ENCODE measurements at regions of chr15 and their contacts with region 1.

Region 1: DNA sequence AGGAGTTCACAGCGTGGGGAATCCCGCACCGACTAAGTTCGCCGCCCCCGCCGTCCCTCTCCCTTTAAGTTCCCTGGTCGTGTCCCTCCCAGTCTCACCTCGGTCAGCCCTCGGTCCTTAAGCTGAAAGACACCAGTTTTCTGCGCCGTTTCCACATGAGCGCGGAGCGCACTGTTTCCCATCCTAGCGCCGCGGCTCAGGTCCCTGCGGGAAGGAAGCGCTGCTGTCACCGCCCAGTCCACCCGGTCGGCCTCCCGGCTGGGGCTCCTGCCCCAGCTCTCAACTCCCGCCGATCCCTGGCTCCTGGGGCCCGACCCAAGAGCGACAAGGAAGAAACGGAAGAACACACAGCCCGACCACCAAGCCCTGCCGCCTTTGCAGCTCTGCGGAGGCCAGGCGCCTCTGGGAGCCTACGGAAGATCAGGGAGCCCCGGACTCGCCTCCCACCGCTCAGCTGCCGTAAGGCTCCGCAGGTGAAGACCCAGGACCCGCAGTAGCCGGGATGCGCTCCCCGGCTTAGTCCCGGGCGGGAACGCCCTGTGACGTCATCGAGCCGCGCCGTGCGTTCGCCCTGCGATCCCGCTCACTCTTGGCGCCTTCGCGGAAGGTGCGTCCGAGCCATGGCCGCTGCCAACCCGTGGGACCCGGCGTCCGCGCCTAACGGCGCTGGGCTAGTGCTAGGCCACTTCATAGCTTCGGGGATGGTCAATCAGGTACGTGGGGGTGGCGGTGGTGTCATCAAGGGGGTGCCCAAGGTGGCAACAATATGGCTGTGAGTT is at the starts of genes HAUS2 and LRRC57:
- DNase-seq: peak; percentile 88 to 93
- H3K4me3 ChIP-seq: peak within 1 kb of the TSS; percentile 97
- H3K4me3 Mint-ChIP-seq: peak within 1 kb of the TSS; percentile 96
- H3K27ac Mint-ChIP-seq: peak within 1 kb of the TSS; percentile 99
- H3K4me1 ChIP-seq: no peaks in the 10 kb centered on the region
- H3K4me1 Mint-ChIP-seq: peaks cover 28% of the 10 kb centered on the region
- H3K27me3 ChIP-seq: no peaks in the 10 kb centered on the region
- H3K27me3 Mint-ChIP-seq: no peaks in the 10 kb centered on the region
- CTCF ChIP-seq: no peak
- total RNA-seq, gene HAUS2: 35.7 and 36.9 TPM in 2 replicates
- total RNA-seq, gene LRRC57: 19.3 and 28.8 TPM in 2 replicates

Region 2: GRCh38 chr15:42444415-42445063 is 103.9 kb before region 1 on chr15:
- CTCF ChIA-PET with region 1: no interaction called
- POLR2A ChIA-PET with region 1: no interaction called
- intact Hi-C with region 1: no loop called
- DNase-seq: no peak
- H3K4me3 ChIP-seq: no peak overlapping the region
- H3K4me3 Mint-ChIP-seq: no peak overlapping the region
- H3K27ac Mint-ChIP-seq: no peak overlapping the region
- H3K4me1 ChIP-seq: no peaks in the 10 kb centered on the region
- H3K4me1 Mint-ChIP-seq: no peaks in the 10 kb centered on the region
- H3K27me3 ChIP-seq: no peaks in the 10 kb centered on the region
- H3K27me3 Mint-ChIP-seq: no peaks in the 10 kb centered on the region
- CTCF ChIP-seq: no peak

Region 3: DNA sequence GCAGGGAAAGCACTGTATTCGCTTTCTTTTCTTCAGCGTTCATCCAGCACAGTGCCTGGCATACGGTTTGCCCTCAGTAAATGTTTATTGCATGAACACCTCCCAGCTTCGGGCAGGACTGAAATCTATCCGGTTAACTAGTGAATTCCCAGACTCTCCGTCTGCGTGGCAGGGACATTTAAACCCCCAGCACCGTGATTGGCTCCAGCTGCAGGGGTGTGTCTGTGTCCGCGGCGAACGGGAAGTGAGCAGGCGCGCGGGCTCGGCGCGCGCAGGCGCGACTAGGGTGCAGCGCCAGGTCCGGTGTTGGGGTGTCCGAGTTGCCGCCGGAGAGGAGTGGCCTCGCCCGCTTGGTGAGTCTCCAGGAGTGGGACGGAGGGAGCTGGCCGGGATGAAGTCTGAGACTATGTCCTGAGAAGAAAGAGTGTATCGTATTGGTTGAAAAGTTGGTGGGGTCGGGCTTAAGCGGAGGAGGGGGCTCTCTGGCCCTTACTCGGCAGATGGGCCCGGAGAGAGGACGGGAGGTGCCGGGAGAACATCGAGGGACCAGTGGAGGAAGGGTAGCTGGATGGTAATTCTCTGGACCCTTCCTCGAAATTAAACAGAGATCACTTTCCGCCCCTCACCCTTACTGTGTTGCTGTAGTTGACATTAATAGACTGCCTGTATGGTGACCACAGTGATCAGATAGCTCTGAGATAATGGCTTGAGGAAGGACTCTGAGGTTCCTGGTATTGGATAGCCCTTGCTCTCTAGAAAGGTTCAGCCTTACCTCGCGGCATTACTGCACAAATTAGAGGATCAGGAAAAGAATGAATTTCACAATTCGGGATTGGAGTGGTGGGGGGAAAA is 52.9 kb before region 1 on chr15 and contains the start of gene SNAP23:
- CTCF ChIA-PET with region 1: no interaction called
- POLR2A ChIA-PET with region 1: interaction called, 4 read pairs
- intact Hi-C with region 1: loop called (anchors 2 kb)
- DNase-seq: peak; percentile 92 to 93
- H3K4me3 ChIP-seq: peak within 1 kb of the TSS; percentile 56
- H3K4me3 Mint-ChIP-seq: peak within 1 kb of the TSS; percentile 84
- H3K27ac Mint-ChIP-seq: peak within 1 kb of the TSS; percentile 72
- H3K4me1 ChIP-seq: peaks cover 42% of the 10 kb centered on the region
- H3K4me1 Mint-ChIP-seq: peaks cover 42% of the 10 kb centered on the region
- H3K27me3 ChIP-seq: no peaks in the 10 kb centered on the region
- H3K27me3 Mint-ChIP-seq: no peaks in the 10 kb centered on the region
- CTCF ChIP-seq: no peak
- total RNA-seq, gene SNAP23: 92.2 and 97.5 TPM in 2 replicates

Region 4: GRCh38 chr15:42575188-42576039 is 27.0 kb after region 1 on chr15 and contains the start of gene STARD9:
- CTCF ChIA-PET with region 1: no interaction called
- POLR2A ChIA-PET with region 1: interaction called, 8 read pairs
- intact Hi-C with region 1: loop called (anchors 1 kb)
- DNase-seq: peak; percentile 98
- H3K4me3 ChIP-seq: peak within 1 kb of the TSS; percentile 58
- H3K4me3 Mint-ChIP-seq: peak within 1 kb of the TSS; percentile 86
- H3K27ac Mint-ChIP-seq: peak within 1 kb of the TSS; percentile 37
- H3K4me1 ChIP-seq: 0 out of 2 replicates have a peak, but pooled peaks cover 10% of the 10 kb centered on the region
- H3K4me1 Mint-ChIP-seq: no peaks in the 10 kb centered on the region
- H3K27me3 ChIP-seq: peaks cover 1% of the 10 kb centered on the region; the same call in 1 of the 2 replicates
- H3K27me3 Mint-ChIP-seq: peaks cover 20% of the 10 kb centered on the region
- CTCF ChIP-seq: no peak
- total RNA-seq, gene STARD9: 0.56 and 0.86 TPM in 2 replicates

Region 5: DNA sequence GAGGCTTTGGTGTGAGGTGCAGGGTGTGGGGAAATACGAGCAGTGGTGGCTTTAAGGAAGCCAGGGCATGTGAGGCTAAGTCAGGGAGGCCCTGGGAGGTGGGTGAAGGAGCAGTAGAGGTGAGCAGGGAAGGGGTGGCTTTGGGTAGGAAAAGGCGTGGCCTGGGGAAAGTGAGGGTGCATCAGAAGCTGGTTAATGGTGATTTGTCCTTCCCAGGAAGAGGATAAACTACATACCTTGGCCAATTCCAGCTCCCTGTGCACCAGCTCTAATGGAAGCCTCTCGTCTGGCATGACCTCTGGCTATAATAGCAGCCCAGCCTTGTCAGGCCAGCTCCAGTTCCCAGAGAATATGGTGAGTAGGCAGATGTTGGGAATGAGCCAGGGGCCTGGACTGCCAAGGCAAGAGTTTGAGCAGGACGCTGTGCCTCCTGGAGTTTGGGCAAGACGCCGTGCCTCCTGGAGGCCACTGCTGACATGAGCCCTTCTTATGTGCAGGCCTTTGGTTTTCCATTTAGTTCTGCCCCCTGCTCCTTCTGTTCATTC is 147.2 kb after region 1 on chr15:
- CTCF ChIA-PET with region 1: no interaction called
- POLR2A ChIA-PET with region 1: no interaction called
- intact Hi-C with region 1: no loop called
- DNase-seq: no peak
- H3K4me3 ChIP-seq: no peak overlapping the region
- H3K4me3 Mint-ChIP-seq: no peak overlapping the region
- H3K27ac Mint-ChIP-seq: no peak overlapping the region
- H3K4me1 ChIP-seq: no peaks in the 10 kb centered on the region
- H3K4me1 Mint-ChIP-seq: no peaks in the 10 kb centered on the region
- H3K27me3 ChIP-seq: no peaks in the 10 kb centered on the region
- H3K27me3 Mint-ChIP-seq: peaks cover 4% of the 10 kb centered on the region
- CTCF ChIP-seq: no peak

Measured in Caco-2 (cell line).